GM12878 (cell line): ENCODE measurements at regions of chr10 and their contacts with region 1.

Region 1: GRCh38 chr10:92880233-92880861 is 32.0 kb downstream of the EXOC6 start:
- DNase-seq: no peak
- ATAC-seq: peak; percentile 83
- H3K4me3 ChIP-seq: no peak overlapping the region
- H3K27ac ChIP-seq: no peak overlapping the region
- H3K4me1 ChIP-seq: no peaks in the 10 kb centered on the region
- H3K27me3 ChIP-seq: no peaks in the 10 kb centered on the region
- CTCF ChIP-seq: peak; percentile 29 to 57 (median 32); a peak in 4 of 6 replicates
- EP300 ChIP-seq: no peak
- POLR2A ChIP-seq: no peak
- RAD21 ChIP-seq: peak; percentile 76

Region 2: GRCh38 chr10:92592761-92593618 is 287.4 kb before region 1 on chr10 and contains the start of gene KIF11:
- CTCF ChIA-PET with region 1: interaction called, 8 read pairs
- POLR2A ChIA-PET with region 1: interaction called, 4 read pairs
- RAD21 ChIA-PET with region 1: interaction called, 5 read pairs
- SMC1A ChIA-PET with region 1: interaction called, 7 read pairs
- in situ Hi-C with region 1: no loop called
- intact Hi-C with region 1: loop called (anchors 2 kb)
- DNase-seq: peak; percentile 88
- ATAC-seq: peak; percentile 81
- H3K4me3 ChIP-seq: peak within 1 kb of the TSS; percentile 88
- H3K27ac ChIP-seq: peak within 1 kb of the TSS; percentile 95
- H3K4me1 ChIP-seq: peaks cover 7% of the 10 kb centered on the region
- H3K27me3 ChIP-seq: no peaks in the 10 kb centered on the region
- CTCF ChIP-seq: no peak
- EP300 ChIP-seq: peak in 1 of 2 experiments; percentile 10; a peak in 1 of 4 replicates
- POLR2A ChIP-seq: peak; percentile 88
- RAD21 ChIP-seq: no peak
- polyA plus RNA-seq, gene KIF11: 14.1 to 17.9 TPM

Region 3: DNA sequence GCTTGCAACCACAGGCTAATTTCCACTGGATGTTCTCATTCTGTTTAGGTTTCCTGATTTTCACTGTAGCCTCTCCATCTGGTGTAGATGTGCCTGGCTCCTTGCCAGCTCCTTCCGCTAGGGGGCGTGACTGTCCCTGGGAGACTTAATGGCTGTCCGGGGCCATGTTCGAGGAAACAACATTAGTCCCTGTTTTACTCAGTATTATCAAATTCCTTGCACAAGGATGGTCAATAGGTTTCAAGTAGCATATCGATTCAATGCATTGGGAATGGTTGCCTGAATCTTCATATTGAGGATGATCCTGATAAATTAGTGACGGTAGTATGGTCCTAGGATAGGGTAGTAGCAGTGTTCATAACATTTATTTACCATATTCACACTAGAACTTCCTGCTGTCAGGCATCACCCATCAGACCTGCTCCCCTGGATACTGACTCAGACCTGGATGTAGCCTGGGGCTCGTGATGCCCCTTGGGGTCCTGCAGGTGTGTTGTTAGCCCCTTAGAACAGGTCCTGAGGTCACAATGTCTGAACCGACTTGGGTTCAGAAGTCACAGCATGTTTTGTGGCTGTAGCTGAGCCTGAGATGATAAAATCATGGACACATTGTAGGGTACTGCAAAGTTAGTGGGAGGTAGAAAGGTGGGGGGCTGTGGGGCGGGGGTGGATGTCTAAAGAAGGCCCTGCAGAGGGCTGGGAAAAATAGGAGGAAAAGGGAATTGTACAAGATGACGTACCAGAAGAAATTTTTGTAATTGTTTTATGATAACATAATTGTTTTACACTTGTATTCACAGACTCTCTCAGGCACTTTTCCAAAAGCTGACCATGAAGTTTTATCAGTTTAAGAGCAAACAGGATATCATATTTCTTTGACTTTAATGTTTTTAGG is 40.9 kb before region 1 on chr10:
- CTCF ChIA-PET with region 1: interaction called, 45 read pairs
- POLR2A ChIA-PET with region 1: no interaction called
- RAD21 ChIA-PET with region 1: interaction called, 13 read pairs
- SMC1A ChIA-PET with region 1: interaction called, 11 read pairs
- in situ Hi-C with region 1: no loop called
- intact Hi-C with region 1: loop called (anchors 1 kb)
- DNase-seq: no peak
- ATAC-seq: peak; percentile 67
- H3K4me3 ChIP-seq: no peak overlapping the region
- H3K27ac ChIP-seq: no peak overlapping the region
- H3K4me1 ChIP-seq: no peaks in the 10 kb centered on the region
- H3K27me3 ChIP-seq: no peaks in the 10 kb centered on the region
- CTCF ChIP-seq: peak; percentile 18 to 67 (median 59)
- EP300 ChIP-seq: no peak
- POLR2A ChIP-seq: no peak
- RAD21 ChIP-seq: peak; percentile 30

Region 4: GRCh38 chr10:92965314-92965713 is 85.0 kb after region 1 on chr10:
- CTCF ChIA-PET with region 1: interaction called, 26 read pairs
- POLR2A ChIA-PET with region 1: no interaction called
- RAD21 ChIA-PET with region 1: interaction called, 4 read pairs
- SMC1A ChIA-PET with region 1: interaction called, 4 read pairs
- in situ Hi-C with region 1: no loop called
- intact Hi-C with region 1: loop called (anchors 1 kb)
- DNase-seq: no peak
- ATAC-seq: 0 out of 3 replicates have a peak, but pooled peaks have one; percentile 33
- H3K4me3 ChIP-seq: no peak overlapping the region
- H3K27ac ChIP-seq: no peak overlapping the region
- H3K4me1 ChIP-seq: no peaks in the 10 kb centered on the region
- H3K27me3 ChIP-seq: no peaks in the 10 kb centered on the region
- CTCF ChIP-seq: peak; percentile 32 to 59 (median 38); a peak in 5 of 6 replicates
- EP300 ChIP-seq: no peak
- POLR2A ChIP-seq: no peak
- RAD21 ChIP-seq: peak; percentile 36; the same call in 1 of the 2 replicates

Region 5: GRCh38 chr10:93074147-93074596 is 193.8 kb after region 1 on chr10:
- CTCF ChIA-PET with region 1: interaction called, 4 read pairs
- POLR2A ChIA-PET with region 1: no interaction called
- RAD21 ChIA-PET with region 1: no interaction called
- SMC1A ChIA-PET with region 1: interaction called, 3 read pairs
- in situ Hi-C with region 1: no loop called
- intact Hi-C with region 1: loop called (anchors 10 kb)
- DNase-seq: no peak
- ATAC-seq: peak; percentile 26
- H3K4me3 ChIP-seq: peak overlapping the region; percentile 27; the same call in 1 of the 2 replicates
- H3K27ac ChIP-seq: no peak overlapping the region
- H3K4me1 ChIP-seq: peaks cover 18% of the 10 kb centered on the region
- H3K27me3 ChIP-seq: peaks cover 28 to 32% of the 10 kb centered on the region in 2 experiments; a peak in 3 of 4 replicates
- CTCF ChIP-seq: no peak
- EP300 ChIP-seq: no peak
- POLR2A ChIP-seq: no peak
- RAD21 ChIP-seq: no peak

Region 6: GRCh38 chr10:93293999-93294398 is 413.7 kb after region 1 on chr10:
- CTCF ChIA-PET with region 1: no interaction called
- POLR2A ChIA-PET with region 1: no interaction called
- RAD21 ChIA-PET with region 1: no interaction called
- SMC1A ChIA-PET with region 1: no interaction called
- in situ Hi-C with region 1: no loop called
- intact Hi-C with region 1: no loop called
- DNase-seq: no peak
- ATAC-seq: no peak
- H3K4me3 ChIP-seq: no peak overlapping the region
- H3K27ac ChIP-seq: no peak overlapping the region
- H3K4me1 ChIP-seq: no peaks in the 10 kb centered on the region
- H3K27me3 ChIP-seq: no peaks in the 10 kb centered on the region; a peak in 1 of 4 replicates
- CTCF ChIP-seq: no peak
- EP300 ChIP-seq: no peak
- POLR2A ChIP-seq: no peak
- RAD21 ChIP-seq: no peak